CD4-positive, alpha-beta T cell (primary cell): ENCODE measurements at regions of chr11 and their contacts with region 1.

Region 1: DNA sequence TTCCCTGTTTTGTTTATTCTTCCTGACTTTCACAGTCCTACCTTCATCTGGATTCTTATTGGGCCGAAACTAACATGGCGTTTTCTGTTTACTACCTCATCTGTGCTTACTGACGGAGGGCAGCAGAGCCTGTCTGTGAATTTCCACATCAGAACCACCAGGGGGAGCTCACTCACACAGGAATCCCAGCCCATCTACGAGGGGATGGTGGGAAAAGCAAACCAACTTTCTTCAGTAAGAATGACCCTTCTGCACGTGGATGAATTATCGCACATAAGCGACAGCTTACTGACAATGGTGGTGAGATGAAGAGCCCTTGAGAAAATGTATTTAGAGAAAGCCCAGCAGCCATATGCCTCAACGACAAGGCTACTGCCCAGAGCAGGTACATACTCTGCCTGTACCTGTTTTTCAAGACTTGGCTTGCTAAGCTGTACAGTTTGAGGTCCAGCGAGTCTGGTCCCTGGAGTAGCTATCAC is 42.5 kb downstream of the LARGE2 start:
- DNase-seq: peak; percentile 27 to 87 (median 44)
- ATAC-seq: peak; percentile 98
- H3K4me3 ChIP-seq: no peak overlapping the region
- H3K4me3 Mint-ChIP-seq: no peak overlapping the region
- H3K27ac ChIP-seq: no peak overlapping the region
- H3K27ac Mint-ChIP-seq: no peak overlapping the region
- H3K4me1 ChIP-seq: peaks cover 5% of the 10 kb centered on the region
- H3K4me1 Mint-ChIP-seq: no peaks in the 10 kb centered on the region
- H3K27me3 ChIP-seq: no peaks in the 10 kb centered on the region
- H3K27me3 Mint-ChIP-seq: no peaks in the 10 kb centered on the region
- CTCF ChIP-seq: peak; percentile 96

Region 2: DNA sequence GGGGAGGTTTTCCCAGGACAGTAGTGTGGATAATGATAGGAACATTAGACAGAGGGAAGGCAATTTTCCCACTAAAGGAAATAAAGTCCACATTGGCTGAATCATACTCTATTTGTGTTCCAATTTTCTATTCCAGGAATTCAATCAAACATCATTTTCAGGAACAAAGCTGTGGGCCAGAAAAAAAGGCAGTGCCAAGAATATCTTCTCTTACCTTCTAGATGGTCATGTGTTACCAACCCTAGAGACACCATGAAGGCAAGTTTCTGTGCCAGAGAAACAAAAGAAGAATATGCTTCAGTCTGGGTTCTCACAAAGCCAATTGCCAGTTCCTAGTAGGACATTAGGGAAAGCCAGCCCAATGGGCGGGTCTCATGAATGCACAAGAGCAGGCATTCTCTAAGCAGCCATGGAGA is 14.9 kb before region 1 on chr11:
- CTCF ChIA-PET with region 1: interaction called, 11 read pairs
- POLR2A ChIA-PET with region 1: no interaction called
- intact Hi-C with region 1: no loop called
- DNase-seq: no peak
- ATAC-seq: no peak
- H3K4me3 ChIP-seq: no peak overlapping the region
- H3K4me3 Mint-ChIP-seq: no peak overlapping the region
- H3K27ac ChIP-seq: no peak overlapping the region
- H3K27ac Mint-ChIP-seq: no peak overlapping the region
- H3K4me1 ChIP-seq: no peaks in the 10 kb centered on the region
- H3K4me1 Mint-ChIP-seq: no peaks in the 10 kb centered on the region
- H3K27me3 ChIP-seq: no peaks in the 10 kb centered on the region
- H3K27me3 Mint-ChIP-seq: no peaks in the 10 kb centered on the region
- CTCF ChIP-seq: no peak

Region 3: GRCh38 chr11:46006418-46007070 is 41.6 kb after region 1 on chr11:
- CTCF ChIA-PET with region 1: interaction called, 33 read pairs
- POLR2A ChIA-PET with region 1: interaction called, 7 read pairs
- intact Hi-C with region 1: loop called (anchors 2 kb)
- DNase-seq: peak in 5 of 14 experiments; percentile 13 to 77 (median 74)
- ATAC-seq: peak; percentile 76
- H3K4me3 ChIP-seq: no peak overlapping the region
- H3K4me3 Mint-ChIP-seq: no peak overlapping the region
- H3K27ac ChIP-seq: no peak overlapping the region
- H3K27ac Mint-ChIP-seq: no peak overlapping the region
- H3K4me1 ChIP-seq: no peaks in the 10 kb centered on the region
- H3K4me1 Mint-ChIP-seq: peaks cover 4% of the 10 kb centered on the region
- H3K27me3 ChIP-seq: no peaks in the 10 kb centered on the region
- H3K27me3 Mint-ChIP-seq: no peaks in the 10 kb centered on the region
- CTCF ChIP-seq: peak; percentile 85

Region 4: GRCh38 chr11:46308631-46309419 is 343.9 kb after region 1 on chr11:
- CTCF ChIA-PET with region 1: no interaction called
- POLR2A ChIA-PET with region 1: interaction called, 3 read pairs
- intact Hi-C with region 1: loop called (anchors 1 to 2 kb)
- DNase-seq: peak; percentile 40 to 79 (median 56)
- ATAC-seq: peak; percentile 87
- H3K4me3 ChIP-seq: no peak overlapping the region
- H3K4me3 Mint-ChIP-seq: no peak overlapping the region
- H3K27ac ChIP-seq: no peak overlapping the region
- H3K27ac Mint-ChIP-seq: no peak overlapping the region
- H3K4me1 ChIP-seq: peaks cover 9% of the 10 kb centered on the region
- H3K4me1 Mint-ChIP-seq: peaks cover 5% of the 10 kb centered on the region
- H3K27me3 ChIP-seq: no peaks in the 10 kb centered on the region
- H3K27me3 Mint-ChIP-seq: no peaks in the 10 kb centered on the region
- CTCF ChIP-seq: peak; percentile 84

Region 5: DNA sequence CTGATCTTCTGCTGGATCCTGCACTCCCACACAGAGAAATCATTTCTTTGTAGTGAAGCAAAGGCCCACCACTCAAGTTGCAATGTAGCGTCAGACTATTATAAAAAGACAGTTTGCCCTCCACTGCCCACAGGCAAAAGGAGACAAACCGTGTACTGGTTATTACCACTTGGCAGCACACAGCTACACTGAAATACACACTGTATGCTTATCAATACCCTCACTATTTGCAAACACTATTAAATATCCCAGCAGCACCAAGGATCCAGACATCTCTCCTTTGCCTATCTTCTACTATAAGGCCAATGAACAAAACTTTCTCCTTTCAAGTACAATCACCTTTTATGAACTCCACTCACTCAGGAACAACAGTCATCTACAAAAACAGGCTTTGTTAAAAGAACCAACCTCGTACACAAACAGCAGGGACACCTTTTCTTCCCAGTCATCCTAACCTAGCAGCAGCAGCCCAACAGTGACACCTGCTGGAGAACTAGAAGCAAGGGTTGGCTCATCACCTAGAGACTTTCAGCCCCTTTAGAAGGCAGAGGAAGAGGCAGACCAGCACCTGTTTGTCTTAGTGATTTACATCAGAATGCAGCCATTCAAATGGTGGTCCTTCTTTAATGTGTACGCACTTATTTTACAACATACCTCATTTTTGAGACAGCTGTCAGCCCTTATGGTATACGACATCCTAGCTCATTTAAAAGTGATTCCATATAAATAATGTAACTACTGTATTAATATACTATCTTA is 572.8 kb after region 1 on chr11:
- CTCF ChIA-PET with region 1: no interaction called
- POLR2A ChIA-PET with region 1: no interaction called
- intact Hi-C with region 1: loop called in 1 of 2 experiments (anchors 5 kb)
- DNase-seq: peak; percentile 30 to 82 (median 48)
- ATAC-seq: peak; percentile 96
- H3K4me3 ChIP-seq: no peak overlapping the region
- H3K4me3 Mint-ChIP-seq: no peak overlapping the region
- H3K27ac ChIP-seq: no peak overlapping the region
- H3K27ac Mint-ChIP-seq: peak overlapping the region; percentile 1
- H3K4me1 ChIP-seq: peaks cover 3% of the 10 kb centered on the region
- H3K4me1 Mint-ChIP-seq: peaks cover 36% of the 10 kb centered on the region
- H3K27me3 ChIP-seq: no peaks in the 10 kb centered on the region
- H3K27me3 Mint-ChIP-seq: no peaks in the 10 kb centered on the region
- CTCF ChIP-seq: peak; percentile 96

Region 6: DNA sequence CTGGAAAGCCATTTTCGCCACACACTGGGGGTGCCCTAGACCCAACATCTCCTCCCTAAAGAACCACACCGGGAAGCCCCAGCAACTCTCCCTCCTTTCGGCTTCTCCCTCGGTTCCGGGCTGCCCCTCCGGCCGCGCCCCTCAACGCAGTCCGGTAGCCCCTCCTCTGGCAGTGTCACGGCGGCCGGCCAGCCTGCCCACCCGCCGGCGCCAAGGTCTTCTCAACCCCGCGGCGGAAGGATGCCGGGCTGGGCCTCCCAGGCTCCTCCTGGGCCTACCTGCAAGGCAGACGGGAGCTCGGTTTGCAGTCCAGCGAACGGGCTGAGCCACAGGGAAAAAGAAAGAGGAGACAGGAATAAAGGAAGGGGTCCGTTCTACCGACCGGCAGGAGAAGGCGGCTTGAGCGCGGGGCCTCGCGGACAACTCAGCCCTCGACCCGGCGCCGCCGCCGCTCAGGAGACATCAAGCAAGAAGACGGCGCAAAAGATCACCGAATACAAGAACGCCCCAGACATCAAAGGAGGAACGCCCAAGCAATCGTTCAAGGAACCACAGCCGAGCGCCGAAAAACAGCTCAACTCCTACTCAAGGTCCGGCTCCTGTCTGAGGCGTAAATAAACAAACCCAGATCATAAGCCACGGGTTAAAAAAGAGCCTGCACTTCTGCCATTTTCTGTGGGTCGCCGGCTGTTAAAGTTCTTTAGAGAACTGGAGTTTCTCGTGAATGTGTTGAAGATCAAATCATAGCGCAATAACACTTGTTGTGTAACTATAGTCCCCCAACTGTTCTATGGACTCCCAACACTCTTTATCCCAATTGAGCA is 628.8 kb after region 1 on chr11 and contains the start of gene AMBRA1:
- CTCF ChIA-PET with region 1: no interaction called
- POLR2A ChIA-PET with region 1: no interaction called
- intact Hi-C with region 1: no loop called
- DNase-seq: peak; percentile 67 to 91 (median 76)
- ATAC-seq: peak; percentile 90
- H3K4me3 ChIP-seq: peak within 1 kb of the TSS; percentile 94
- H3K4me3 Mint-ChIP-seq: peak within 1 kb of the TSS; percentile 92
- H3K27ac ChIP-seq: peak within 1 kb of the TSS; percentile 42 to 55
- H3K27ac Mint-ChIP-seq: peak within 1 kb of the TSS; percentile 85
- H3K4me1 ChIP-seq: peaks cover 33% of the 10 kb centered on the region
- H3K4me1 Mint-ChIP-seq: peaks cover 43% of the 10 kb centered on the region
- H3K27me3 ChIP-seq: no peaks in the 10 kb centered on the region
- H3K27me3 Mint-ChIP-seq: no peaks in the 10 kb centered on the region
- CTCF ChIP-seq: no peak
- total RNA-seq, gene AMBRA1: 29.4 to 31.9 TPM